Activated B cell treated with CpG ODN at 0.5 μM for 24 hours (primary cell): ENCODE measurements at regions of chr7 and their contacts with region 1.

Region 1: GRCh38 chr7:76359111-76359978 is 554 bp upstream of the YWHAG start:
- DNase-seq: peak; percentile 90
- ATAC-seq: peak; percentile 90
- H3K4me3 Mint-ChIP-seq: peak overlapping the region; percentile 92
- H3K27ac Mint-ChIP-seq: peak overlapping the region; percentile 98
- H3K4me1 Mint-ChIP-seq: peaks cover 39% of the 10 kb centered on the region
- H3K27me3 Mint-ChIP-seq: no peaks in the 10 kb centered on the region
- CTCF ChIP-seq: no peak

Region 2: DNA sequence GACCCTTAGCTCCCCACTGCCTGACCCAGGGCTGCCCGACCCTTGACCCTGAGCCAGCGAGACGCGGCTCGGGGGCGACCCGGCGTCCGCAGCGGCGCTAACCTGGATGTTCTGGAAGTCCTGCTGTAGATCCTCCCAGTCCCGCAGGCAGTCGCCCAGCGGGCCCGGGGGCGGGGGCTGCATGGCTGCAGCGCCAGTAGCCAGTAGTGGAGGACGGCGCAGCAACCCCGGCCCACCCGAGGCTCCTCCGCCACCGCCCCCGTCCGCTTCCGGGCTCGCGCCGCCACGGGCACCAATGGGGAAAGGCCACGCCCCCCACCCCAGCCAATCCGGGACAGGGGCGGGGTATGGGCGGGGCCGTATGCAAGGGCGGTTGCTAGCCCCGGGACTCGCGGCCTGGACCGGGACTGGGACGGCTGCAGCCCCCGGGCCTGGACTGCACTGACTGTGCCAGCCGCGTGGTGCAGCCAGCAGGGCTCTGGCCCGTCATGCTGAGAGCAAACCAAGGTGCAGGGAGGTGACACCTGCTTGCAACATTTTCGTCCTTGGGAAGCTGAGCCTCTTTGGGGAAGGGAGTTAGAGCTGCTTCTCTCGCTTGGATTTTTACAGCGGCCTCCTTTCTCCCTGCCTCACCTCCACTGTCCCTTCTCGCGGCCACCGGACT is 364.8 kb before region 1 on chr7 and contains the start of gene TMEM120A:
- CTCF ChIA-PET with region 1: no interaction called
- POLR2A ChIA-PET with region 1: no interaction called
- intact Hi-C with region 1: loop called (anchors 5 kb)
- DNase-seq: peak; percentile 92
- ATAC-seq: peak; percentile 99
- H3K4me3 Mint-ChIP-seq: peak within 1 kb of the TSS; percentile 81
- H3K27ac Mint-ChIP-seq: peak within 1 kb of the TSS; percentile 25
- H3K4me1 Mint-ChIP-seq: peaks cover 39% of the 10 kb centered on the region
- H3K27me3 Mint-ChIP-seq: no peaks in the 10 kb centered on the region
- CTCF ChIP-seq: no peak
- total RNA-seq, gene TMEM120A: 95.6 and 104 TPM in 2 replicates

Region 3: GRCh38 chr7:76179686-76180085 is 179.7 kb before region 1 on chr7:
- CTCF ChIA-PET with region 1: no interaction called
- POLR2A ChIA-PET with region 1: interaction called, 5 read pairs
- intact Hi-C with region 1: loop called (anchors 1 kb)
- DNase-seq: no peak
- ATAC-seq: no peak
- H3K4me3 Mint-ChIP-seq: no peak overlapping the region
- H3K27ac Mint-ChIP-seq: no peak overlapping the region
- H3K4me1 Mint-ChIP-seq: peaks cover 3% of the 10 kb centered on the region
- H3K27me3 Mint-ChIP-seq: peaks cover 6% of the 10 kb centered on the region
- CTCF ChIP-seq: no peak

Region 4: DNA sequence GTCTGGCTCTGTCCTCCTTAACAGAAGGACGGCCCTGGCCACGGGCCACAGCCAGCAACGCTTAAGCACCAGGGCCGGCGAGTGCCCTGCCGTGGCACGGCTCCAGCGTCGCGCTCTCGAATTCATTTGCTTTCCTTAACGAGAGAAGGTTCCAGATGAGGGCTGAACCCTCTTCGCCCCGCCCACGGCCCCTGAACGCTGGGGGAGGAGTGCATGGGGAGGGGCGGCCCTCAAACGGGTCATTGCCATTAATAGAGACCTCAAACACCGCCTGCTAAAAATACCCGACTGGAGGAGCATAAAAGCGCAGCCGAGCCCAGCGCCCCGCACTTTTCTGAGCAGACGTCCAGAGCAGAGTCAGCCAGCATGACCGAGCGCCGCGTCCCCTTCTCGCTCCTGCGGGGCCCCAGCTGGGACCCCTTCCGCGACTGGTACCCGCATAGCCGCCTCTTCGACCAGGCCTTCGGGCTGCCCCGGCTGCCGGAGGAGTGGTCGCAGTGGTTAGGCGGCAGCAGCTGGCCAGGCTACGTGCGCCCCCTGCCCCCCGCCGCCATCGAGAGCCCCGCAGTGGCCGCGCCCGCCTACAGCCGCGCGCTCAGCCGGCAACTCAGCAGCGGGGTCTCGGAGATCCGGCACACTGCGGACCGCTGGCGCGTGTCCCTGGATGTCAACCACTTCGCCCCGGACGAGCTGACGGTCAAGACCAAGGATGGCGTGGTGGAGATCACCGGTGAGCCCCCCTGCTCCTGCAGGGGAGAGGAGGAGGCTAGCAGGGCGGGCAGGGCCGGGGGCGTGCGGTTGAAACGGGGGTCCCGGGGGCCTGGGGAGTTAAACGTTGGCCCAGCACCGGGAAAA is 56.8 kb before region 1 on chr7 and contains the start of gene HSPB1:
- CTCF ChIA-PET with region 1: no interaction called
- POLR2A ChIA-PET with region 1: interaction called, 12 read pairs
- intact Hi-C with region 1: loop called (anchors 1 kb)
- DNase-seq: peak; percentile 65
- ATAC-seq: peak; percentile 76
- H3K4me3 Mint-ChIP-seq: peak within 1 kb of the TSS; percentile 90
- H3K27ac Mint-ChIP-seq: peak within 1 kb of the TSS; percentile 81
- H3K4me1 Mint-ChIP-seq: peaks cover 13% of the 10 kb centered on the region
- H3K27me3 Mint-ChIP-seq: no peaks in the 10 kb centered on the region
- CTCF ChIP-seq: no peak
- total RNA-seq, gene HSPB1: 63.4 and 65.6 TPM in 2 replicates

Region 5: GRCh38 chr7:76393116-76394031 is 34.0 kb after region 1 on chr7:
- CTCF ChIA-PET with region 1: interaction called, 3 read pairs
- POLR2A ChIA-PET with region 1: interaction called, 5 read pairs
- intact Hi-C with region 1: loop called (anchors 1 kb)
- DNase-seq: peak; percentile 96
- ATAC-seq: peak; percentile 81
- H3K4me3 Mint-ChIP-seq: peak overlapping the region; percentile 88
- H3K27ac Mint-ChIP-seq: peak overlapping the region; percentile 97
- H3K4me1 Mint-ChIP-seq: peaks cover 30% of the 10 kb centered on the region
- H3K27me3 Mint-ChIP-seq: no peaks in the 10 kb centered on the region
- CTCF ChIP-seq: no peak